Activated CD4-positive, alpha-beta memory T cell treated with anti-CD3 and anti-CD28 coated beads, Interleukin-2, amount 10 ng/mL, durations not matched to agents 7 days and 5 days (primary cell): ENCODE measurements at regions of chr5 and their contacts with region 1.

Region 1: GRCh38 chr5:73565139-73565968 is at the starts of genes ANKRA2 and UTP15:
- DNase-seq: peak; percentile 98
- H3K4me3 Mint-ChIP-seq: peak within 1 kb of the TSS; percentile 91
- H3K27ac Mint-ChIP-seq: peak within 1 kb of the TSS; percentile 95
- H3K4me1 Mint-ChIP-seq: peaks cover 44% of the 10 kb centered on the region
- H3K27me3 Mint-ChIP-seq: no peaks in the 10 kb centered on the region
- total RNA-seq, gene ANKRA2: 23.9 to 27.1 TPM
- total RNA-seq, gene UTP15: 15.1 to 15.4 TPM

Region 2: DNA sequence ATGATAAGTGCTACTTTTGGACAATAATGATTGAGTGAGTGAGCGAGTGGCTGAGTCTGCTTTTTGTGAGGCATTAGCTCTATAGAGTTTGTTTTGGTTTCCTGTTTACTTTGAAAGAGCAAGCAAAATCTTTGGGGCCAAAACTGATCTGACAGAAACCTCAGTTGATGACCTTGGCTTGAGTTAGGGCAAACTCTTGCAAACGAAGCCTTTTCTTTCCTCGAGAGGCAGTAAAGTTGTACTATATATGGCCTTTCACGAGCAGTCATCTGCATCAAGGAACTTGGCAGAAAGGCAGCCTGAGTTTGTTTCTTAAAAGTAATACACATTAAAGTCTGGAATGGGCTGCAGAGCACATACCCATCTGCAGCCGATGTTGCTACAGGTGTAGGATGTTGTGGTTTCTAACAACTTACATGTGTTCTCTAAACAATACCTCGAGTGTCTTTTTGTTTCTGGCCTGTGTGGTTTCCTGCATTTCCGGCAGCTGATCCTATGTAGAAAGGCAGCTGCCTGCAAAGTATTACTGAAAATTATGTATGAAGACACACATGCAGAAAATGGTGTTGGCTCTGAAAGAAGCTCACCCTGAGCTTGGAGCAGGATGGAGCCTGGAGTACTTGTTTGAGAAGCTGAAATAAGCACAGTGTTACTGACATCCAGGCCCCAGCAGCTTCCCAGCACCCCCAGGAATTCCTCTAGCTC is 177.6 kb before region 1 on chr5:
- CTCF ChIA-PET with region 1: no interaction called
- POLR2A ChIA-PET with region 1: no interaction called
- DNase-seq: peak; percentile 72
- H3K4me3 Mint-ChIP-seq: no peak overlapping the region
- H3K27ac Mint-ChIP-seq: peak overlapping the region; percentile 72
- H3K4me1 Mint-ChIP-seq: peaks cover 22% of the 10 kb centered on the region
- H3K27me3 Mint-ChIP-seq: peaks cover 55% of the 10 kb centered on the region

Region 3: DNA sequence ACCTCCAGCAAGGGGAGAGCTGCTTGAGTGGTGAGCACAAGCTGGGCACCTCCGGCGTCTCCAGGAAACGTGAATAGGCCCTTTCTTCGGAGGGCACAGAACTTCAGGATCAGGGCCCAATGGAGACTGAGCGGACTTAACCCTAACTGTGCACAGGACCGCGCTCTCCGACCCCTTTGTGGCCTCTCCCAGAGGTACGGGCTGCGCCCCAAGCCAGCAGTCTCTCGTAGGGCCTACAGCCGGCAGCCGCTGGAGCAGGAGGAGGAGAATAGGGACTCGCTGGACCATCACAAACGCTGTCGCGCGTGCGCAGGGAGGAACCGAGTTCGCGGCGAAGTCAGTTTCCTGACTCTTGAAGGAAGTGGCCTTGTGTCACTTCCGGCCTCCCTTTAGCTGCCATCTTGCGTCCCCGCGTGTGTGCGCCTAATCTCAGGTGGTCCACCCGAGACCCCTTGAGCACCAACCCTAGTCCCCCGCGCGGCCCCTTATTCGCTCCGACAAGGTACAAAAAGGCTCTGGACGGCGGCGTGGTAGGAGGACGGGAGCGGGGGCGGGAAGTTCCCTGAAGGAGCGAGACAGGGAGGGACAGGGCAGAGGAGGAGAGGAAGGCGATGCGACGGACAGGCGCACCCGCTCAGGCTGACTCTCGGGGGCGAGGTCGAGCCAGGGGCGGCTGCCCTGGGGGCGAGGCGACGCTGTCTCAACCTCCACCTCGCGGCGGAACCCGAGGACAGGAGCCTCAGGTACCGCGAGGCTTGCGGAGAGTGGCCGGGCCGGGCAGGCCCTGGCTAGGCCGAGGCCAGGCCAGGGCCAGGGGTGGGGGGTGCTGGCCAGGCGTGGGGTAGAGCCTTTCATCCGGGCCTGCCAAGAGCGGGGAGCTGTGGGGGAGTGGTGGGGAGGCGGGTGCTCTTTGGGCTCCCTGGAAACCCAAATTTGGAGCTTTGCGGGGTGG is 67.0 kb before region 1 on chr5 and contains the start of gene BTF3:
- CTCF ChIA-PET with region 1: interaction called, 5 read pairs
- POLR2A ChIA-PET with region 1: interaction called, 55 read pairs
- DNase-seq: peak; percentile 95
- H3K4me3 Mint-ChIP-seq: peak within 1 kb of the TSS; percentile 98
- H3K27ac Mint-ChIP-seq: peak within 1 kb of the TSS; percentile 98
- H3K4me1 Mint-ChIP-seq: peaks cover 47% of the 10 kb centered on the region
- H3K27me3 Mint-ChIP-seq: peaks cover 9% of the 10 kb centered on the region
- total RNA-seq, gene BTF3: 716 to 729 TPM